T-cell (primary cell): ENCODE measurements at regions of chr2 and their contacts with region 1.

Region 1: GRCh38 chr2:223442847-223443246 is 159.3 kb downstream of the SCG2 start:
- DNase-seq: no peak
- ATAC-seq: no peak
- H3K4me3 ChIP-seq: no peak overlapping the region
- H3K4me3 Mint-ChIP-seq: no peak overlapping the region
- H3K27ac ChIP-seq: no peak overlapping the region
- H3K27ac Mint-ChIP-seq: no peak overlapping the region
- H3K4me1 ChIP-seq: no peaks in the 10 kb centered on the region
- H3K4me1 Mint-ChIP-seq: no peaks in the 10 kb centered on the region
- H3K27me3 ChIP-seq: no peaks in the 10 kb centered on the region
- H3K27me3 Mint-ChIP-seq: no peaks in the 10 kb centered on the region

Region 2: DNA sequence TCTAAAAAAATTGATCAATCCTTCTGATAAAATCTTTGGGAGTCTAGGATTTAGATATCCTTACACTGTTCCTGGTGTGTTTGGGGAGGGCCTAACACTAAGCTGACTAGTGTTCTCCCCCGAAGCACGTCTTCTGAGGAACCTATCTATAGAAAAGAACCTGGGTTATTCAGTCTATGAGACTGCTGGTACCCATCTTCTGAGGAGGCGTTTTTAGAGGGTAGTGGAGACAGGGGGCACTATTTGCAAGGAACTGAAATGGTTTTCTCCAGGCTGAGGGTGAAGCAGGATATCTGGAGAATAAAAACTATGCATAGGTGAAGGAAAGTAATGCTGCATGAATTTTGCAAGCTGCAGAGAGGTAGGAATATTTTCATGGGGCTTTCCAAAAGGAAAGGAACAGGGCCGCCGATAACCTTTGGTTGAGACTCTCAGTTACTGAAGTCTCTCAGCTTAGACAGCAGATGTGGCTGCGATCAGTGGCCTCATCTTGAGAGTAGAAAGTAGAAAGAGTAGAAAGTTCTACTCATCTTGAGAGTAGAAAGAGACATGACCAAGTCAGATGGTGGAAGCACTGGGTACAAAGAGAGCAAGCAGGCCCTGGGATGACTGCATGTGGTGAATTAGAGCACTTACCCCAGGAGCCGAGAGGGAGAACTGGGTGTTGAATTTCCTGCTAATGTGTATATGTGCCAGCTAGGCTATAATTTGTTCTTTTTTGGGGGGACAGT is 422.7 kb before region 1 on chr2:
- CTCF ChIA-PET with region 1: no interaction called
- POLR2A ChIA-PET with region 1: interaction called in 1 of 2 experiments, 11 read pairs
- DNase-seq: no peak
- ATAC-seq: no peak
- H3K4me3 ChIP-seq: no peak overlapping the region
- H3K4me3 Mint-ChIP-seq: no peak overlapping the region
- H3K27ac ChIP-seq: no peak overlapping the region
- H3K27ac Mint-ChIP-seq: no peak overlapping the region
- H3K4me1 ChIP-seq: no peaks in the 10 kb centered on the region
- H3K4me1 Mint-ChIP-seq: no peaks in the 10 kb centered on the region
- H3K27me3 ChIP-seq: no peaks in the 10 kb centered on the region
- H3K27me3 Mint-ChIP-seq: no peaks in the 10 kb centered on the region